Activated CD4-positive, alpha-beta T cell treated with anti-CD3 and anti-CD28 coated beads for 36 hours (primary cell): ENCODE measurements at regions of chr7 and their contacts with region 1.

Region 1: GRCh38 chr7:100215895-100216294 is 3.9 kb upstream of the PVRIG start:
- DNase-seq: no peak
- ATAC-seq: no peak
- H3K4me3 Mint-ChIP-seq: no peak overlapping the region
- H3K27ac Mint-ChIP-seq: peak overlapping the region; percentile 4
- H3K4me1 Mint-ChIP-seq: peaks cover 54% of the 10 kb centered on the region
- H3K27me3 Mint-ChIP-seq: no peaks in the 10 kb centered on the region

Region 2: DNA sequence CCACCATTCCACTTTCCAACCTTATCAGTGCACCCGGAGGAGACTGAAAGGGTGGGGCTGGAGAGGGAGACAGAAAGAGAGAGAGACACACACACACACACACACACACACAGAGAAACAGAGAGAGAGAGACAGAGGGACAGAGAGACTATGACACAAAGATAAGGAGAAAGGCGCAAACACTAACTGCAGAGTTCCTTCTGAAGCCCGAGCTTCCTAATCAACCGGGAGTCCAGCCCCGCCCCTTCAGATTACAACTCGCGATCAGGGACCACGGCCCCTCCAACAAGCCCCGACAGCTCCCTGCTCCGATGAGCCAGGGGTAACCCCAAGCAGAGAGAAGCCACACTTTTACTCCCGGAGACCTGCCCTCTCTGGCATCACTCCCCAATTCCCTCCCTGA is 48.0 kb before region 1 on chr7:
- CTCF ChIA-PET with region 1: interaction called, 3 read pairs
- POLR2A ChIA-PET with region 1: interaction called, 3 read pairs
- intact Hi-C with region 1: loop called in 1 of 2 experiments (anchors 5 kb)
- DNase-seq: peak; percentile 28
- ATAC-seq: peak; percentile 8
- H3K4me3 Mint-ChIP-seq: peak overlapping the region; percentile 70
- H3K27ac Mint-ChIP-seq: peak overlapping the region; percentile 82
- H3K4me1 Mint-ChIP-seq: peaks cover 74% of the 10 kb centered on the region
- H3K27me3 Mint-ChIP-seq: no peaks in the 10 kb centered on the region